ENCODE measurements at regions of chr1 and their contacts with region 1.

Region 1: DNA sequence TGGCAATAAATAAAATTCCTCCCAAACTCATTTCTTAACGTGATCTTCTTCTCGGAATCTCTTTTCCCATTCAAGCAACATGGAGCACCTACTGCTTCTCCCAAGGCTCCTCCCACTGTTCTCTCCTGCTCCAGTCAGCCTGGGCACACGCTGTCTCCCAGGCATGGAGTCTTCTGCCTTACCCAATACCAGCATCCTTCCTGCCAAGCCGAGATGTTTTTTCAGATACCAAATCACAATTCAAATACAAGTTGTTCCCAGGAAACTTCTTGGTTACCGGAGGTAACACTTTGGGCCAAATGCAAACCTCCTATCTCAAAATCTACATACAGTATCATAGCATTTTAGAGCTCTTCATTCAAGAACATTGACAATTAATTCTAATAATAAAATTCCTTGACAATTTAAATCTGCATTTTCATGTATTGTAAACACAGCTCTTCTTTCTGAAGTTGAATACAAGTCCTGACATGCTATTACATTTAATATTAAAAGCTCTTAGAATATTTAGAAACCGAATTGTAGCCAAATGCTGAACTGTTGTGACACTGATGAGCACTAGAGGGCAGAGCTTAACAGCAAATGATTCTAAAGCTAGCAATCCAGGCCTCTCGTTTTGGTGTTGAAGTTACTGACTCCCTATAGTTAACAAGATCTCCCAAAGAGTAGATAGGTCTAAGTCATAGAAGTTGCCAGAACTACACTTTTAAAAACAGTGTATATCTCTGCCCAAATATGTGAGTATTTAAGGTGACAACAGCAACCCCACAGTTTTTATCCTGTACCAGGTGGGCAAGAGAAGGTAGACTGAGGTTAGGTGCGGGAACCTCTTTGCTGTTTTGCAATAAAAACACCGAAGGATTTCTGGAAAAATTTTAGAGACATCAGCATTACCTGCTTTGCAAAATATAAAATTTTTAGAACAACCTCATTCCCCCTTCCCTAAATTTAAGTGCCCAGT is 52.3 kb downstream of the BCAR3 start:
- DNase-seq: peak; percentile 77

Region 2: GRCh38 chr1:93615582-93616150 is 13.7 kb before region 1 on chr1:
- CTCF ChIA-PET with region 1: interaction called, 13 read pairs
- POLR2A ChIA-PET with region 1: interaction called, 3 read pairs
- DNase-seq: no peak

Region 3: DNA sequence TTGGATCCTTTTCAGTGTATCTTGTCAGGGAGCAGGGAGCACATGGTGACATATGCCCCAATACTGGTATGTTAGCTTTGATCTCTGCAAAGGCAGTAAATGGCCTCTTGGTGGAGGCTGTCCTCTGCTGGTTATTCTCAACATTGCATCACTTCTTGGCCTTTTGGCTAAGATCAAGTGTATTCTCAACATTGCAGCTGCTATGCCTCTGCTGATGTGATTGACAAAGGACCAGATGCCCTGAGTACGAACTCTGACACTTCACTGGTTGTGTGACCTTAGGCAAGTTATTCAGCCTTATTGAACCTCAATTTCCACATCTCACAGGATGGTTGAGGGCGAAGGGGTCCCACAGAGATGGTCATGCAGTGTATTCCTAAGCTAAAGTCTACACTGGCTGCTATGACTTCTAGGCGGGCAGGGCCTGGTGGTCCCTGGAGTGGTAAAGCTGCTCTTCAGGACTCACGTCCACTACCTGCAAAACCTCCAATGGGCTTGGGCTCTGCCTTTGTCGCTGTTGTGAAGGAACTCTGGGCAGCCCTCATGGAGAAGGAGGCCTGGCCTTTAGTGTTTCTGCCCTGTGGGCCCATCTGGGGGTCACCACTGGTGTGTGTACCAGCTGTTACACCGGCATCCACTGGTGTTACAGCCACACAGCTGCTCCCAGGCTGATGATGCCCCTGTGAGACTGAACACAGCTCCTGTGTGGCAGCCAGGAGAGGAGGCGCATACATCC is 184.8 kb after region 1 on chr1:
- CTCF ChIA-PET with region 1: interaction called, 75 read pairs
- POLR2A ChIA-PET with region 1: interaction called, 5 read pairs
- DNase-seq: peak; percentile 75

Region 4: DNA sequence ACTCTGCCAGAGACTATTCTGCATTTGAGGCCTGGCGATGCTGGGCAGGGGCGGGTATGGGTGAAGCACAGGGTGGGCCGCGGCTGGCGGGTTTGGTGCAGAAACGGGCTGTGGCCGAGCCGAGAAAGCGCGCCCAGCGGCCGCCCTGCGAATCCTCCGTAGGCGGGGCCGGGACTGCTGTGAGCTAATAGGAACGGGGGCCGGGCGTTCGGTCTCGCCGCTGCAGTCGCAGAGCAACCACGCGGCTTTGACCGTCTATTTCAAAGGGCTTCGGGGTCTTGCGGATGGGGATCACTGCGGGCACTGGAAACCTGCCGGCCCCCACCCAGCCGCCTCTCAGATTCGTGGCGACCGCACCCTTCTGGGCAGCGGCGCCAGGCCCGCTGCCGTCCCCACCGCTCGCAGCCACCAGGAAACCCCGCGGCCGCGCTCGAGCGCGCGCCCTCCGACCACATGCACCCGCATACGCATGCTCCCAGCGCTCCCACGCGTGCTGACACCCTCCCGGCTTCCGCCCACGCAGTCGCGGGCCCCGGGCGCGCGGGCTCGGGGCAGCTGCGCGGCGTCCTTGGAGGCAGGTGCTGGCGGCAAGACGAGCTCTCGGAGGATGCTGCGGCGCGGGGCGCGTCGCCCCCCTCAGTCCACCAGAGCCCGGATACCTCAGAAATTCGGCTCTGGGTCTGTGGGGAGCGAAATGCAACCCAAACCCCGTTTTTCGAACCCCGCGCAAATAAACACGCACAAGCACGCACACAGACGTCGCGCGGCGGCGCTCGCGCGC is 217.0 kb after region 1 on chr1:
- CTCF ChIA-PET with region 1: interaction called, 61 read pairs
- POLR2A ChIA-PET with region 1: interaction called, 10 read pairs
- DNase-seq: peak; percentile 84

Measured in HEK293T (cell line).